ENCODE measurements at regions of chr10 and their contacts with region 1.

Region 1: DNA sequence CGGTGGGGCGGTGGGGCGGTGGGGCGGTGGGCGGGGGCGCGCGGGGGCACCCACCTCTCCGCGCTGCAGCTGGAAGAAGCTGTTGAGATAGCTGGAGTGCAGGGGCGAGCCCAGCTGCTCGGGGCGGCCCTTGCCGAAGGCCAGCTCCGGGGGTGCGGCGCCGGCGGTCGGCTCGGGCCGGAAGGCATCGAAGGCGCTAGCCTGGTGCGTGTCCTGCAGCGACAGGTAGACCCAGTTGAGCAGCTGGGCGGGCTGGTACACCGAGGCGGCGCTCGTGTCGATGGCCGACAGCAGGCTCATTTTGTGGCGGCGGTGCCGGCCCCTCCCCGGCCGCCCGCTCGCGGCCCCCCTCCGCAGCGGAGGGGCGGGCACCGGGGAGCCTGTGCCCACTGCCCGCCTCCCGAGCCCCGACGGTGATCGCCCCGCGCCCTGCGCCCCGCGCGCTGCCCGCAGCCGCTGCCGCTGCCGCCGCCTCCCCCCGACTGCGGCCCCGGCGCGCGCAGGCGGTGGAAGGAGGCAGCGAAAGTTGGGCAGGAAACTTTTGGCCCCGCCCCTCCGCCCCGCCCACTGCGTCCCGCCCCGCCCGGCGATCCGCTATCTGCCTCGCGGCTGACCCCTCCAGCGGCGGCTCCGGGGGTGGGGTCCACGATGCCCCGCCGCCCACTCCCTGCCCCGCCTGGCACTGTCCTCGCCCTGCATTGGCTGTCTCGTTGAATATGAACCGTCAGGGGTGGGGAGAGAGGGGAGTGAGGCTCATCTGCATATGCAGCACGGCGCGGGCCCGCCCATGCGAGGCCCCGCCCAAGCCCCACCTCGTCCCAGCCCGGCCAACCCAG is at the start of gene ZCCHC24:
- DNase-seq: peak; percentile 83 to 95 (median 92)
- ATAC-seq: peak; percentile 95
- H3K4me3 ChIP-seq: peak within 1 kb of the TSS; percentile 78
- H3K4me3 Mint-ChIP-seq: peak within 1 kb of the TSS; percentile 86 to 99 (median 91)
- H3K27ac ChIP-seq: peak within 1 kb of the TSS; percentile 67
- H3K27ac Mint-ChIP-seq: peak within 1 kb of the TSS; percentile 27 to 91 (median 84)
- H3K4me1 ChIP-seq: peaks cover 10% of the 10 kb centered on the region in 2 donors
- H3K4me1 Mint-ChIP-seq: peaks cover 20 to 35% (median 28%) of the 10 kb centered on the region in 7 donors
- H3K27me3 ChIP-seq: no peaks in the 10 kb centered on the region
- H3K27me3 Mint-ChIP-seq: peaks cover 0 to 44% (median 0%) of the 10 kb centered on the region in 5 donors
- total RNA-seq, gene ZCCHC24: 0.58 to 2.0 (median 0.76) TPM

Region 2: GRCh38 chr10:78302989-78303854 is 1142.1 kb before region 1 on chr10:
- CTCF ChIA-PET with region 1: no interaction called
- POLR2A ChIA-PET with region 1: no interaction called
- intact Hi-C with region 1: loop called in 1 of 2 experiments (anchors 1 kb)
- DNase-seq: peak; percentile 89 to 98 (median 94)
- ATAC-seq: peak; percentile 92
- H3K4me3 ChIP-seq: peak overlapping the region; percentile 92
- H3K4me3 Mint-ChIP-seq: peak overlapping the region; percentile 90 to 99 (median 96)
- H3K27ac ChIP-seq: peak overlapping the region; percentile 87
- H3K27ac Mint-ChIP-seq: peak overlapping the region; percentile 94 to 99 (median 97)
- H3K4me1 ChIP-seq: peaks cover 10 to 11% of the 10 kb centered on the region in 2 donors
- H3K4me1 Mint-ChIP-seq: peaks cover 6 to 34% (median 19%) of the 10 kb centered on the region in 7 donors
- H3K27me3 ChIP-seq: no peaks in the 10 kb centered on the region
- H3K27me3 Mint-ChIP-seq: peaks cover 0 to 23% (median 0%) of the 10 kb centered on the region in 5 donors

Region 3: DNA sequence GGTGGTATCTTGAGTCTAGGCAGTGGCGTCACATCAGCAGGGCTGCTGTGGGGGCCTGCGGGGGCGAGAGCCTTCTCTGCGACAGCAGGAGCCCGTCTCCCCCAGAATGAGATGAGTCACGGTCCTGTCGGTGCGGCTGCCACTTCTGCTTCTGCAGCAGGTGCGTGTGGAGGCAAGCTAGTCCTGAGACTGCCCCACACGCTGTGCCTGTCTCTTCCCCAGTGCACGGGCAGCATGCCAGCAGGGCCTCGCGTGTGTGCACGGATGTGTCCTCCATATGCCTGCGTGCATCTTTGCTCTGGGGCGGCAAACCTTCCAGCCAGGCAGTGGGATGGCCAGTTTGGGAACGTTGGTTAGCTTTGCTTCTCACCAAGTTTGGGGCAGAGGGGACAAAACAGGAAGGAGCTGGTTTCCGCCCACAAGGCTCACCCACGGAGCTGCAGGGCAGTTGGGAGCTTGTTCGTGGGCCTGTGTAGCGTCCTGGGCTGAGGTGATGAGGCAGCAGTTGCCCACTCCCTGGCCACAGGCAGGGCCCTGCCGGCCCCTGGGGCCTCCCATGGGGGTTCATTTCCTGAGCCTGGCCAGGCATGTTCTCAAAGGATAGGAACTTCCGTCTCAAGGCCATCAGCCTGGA is 158.9 kb before region 1 on chr10:
- CTCF ChIA-PET with region 1: no interaction called
- POLR2A ChIA-PET with region 1: no interaction called
- intact Hi-C with region 1: loop called (anchors 1 to 5 kb)
- DNase-seq: peak; percentile 51 to 80 (median 75)
- ATAC-seq: peak; percentile 92
- H3K4me3 ChIP-seq: peak overlapping the region; percentile 34
- H3K4me3 Mint-ChIP-seq: peak overlapping the region; percentile 70 to 80 (median 74)
- H3K27ac ChIP-seq: no peak overlapping the region
- H3K27ac Mint-ChIP-seq: peak overlapping the region; percentile 49 to 88 (median 66)
- H3K4me1 ChIP-seq: peaks cover 21 to 31% of the 10 kb centered on the region in 2 donors
- H3K4me1 Mint-ChIP-seq: peaks cover 24 to 52% (median 38%) of the 10 kb centered on the region in 7 donors
- H3K27me3 ChIP-seq: no peaks in the 10 kb centered on the region
- H3K27me3 Mint-ChIP-seq: no peaks in the 10 kb centered on the region

Region 4: DNA sequence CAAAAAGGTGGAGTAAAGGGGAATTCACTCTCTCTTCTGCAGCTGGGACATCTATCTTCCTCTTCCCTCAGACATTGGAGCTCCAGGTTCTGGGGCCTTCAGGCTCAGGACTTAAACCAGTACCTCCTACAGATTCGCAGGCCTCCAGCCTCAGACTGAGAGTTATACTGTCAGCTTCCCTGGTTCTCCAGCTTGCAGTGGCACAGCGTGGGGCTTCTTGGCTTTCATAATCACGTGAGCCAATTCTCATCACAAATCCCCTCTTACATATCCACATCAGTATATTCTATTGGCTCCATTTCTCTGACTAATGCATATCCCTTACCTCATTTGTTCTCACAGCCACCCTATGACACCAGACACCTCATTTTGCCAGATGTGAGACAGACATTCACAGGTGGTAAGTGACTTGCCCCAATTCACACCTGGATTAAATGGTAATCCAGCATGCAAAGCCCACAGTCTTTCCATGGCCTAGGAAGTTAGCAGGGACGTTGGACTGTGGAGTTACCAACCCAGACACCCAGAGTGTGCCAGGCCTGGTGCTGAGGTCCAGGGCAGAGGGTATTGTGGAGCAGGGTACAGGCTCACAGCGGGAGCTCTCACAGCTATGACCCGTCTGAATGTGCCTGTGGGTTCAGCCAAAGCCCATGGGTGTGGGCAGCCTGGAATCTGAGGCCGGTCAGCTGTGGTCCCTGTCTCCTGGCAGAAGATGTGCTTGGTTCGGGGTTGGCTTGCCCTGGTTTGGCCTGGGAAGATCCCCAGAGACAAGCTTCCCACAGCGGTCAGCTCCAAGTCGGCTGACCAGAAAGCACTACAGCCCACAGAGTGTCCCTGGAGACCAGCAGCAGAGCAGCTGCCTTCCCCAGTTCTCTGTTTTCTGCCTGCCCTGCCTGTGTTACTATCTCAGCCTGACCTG is 18.5 kb after region 1 on chr10:
- CTCF ChIA-PET with region 1: no interaction called
- POLR2A ChIA-PET with region 1: no interaction called
- intact Hi-C with region 1: loop called in 1 of 2 experiments (anchors 2 kb)
- DNase-seq: no peak
- ATAC-seq: no peak
- H3K4me3 ChIP-seq: no peak overlapping the region
- H3K4me3 Mint-ChIP-seq: no peak overlapping the region
- H3K27ac ChIP-seq: no peak overlapping the region
- H3K27ac Mint-ChIP-seq: no peak overlapping the region
- H3K4me1 ChIP-seq: no peaks in the 10 kb centered on the region
- H3K4me1 Mint-ChIP-seq: peaks cover 0 to 2% (median 0%) of the 10 kb centered on the region in 7 donors
- H3K27me3 ChIP-seq: no peaks in the 10 kb centered on the region
- H3K27me3 Mint-ChIP-seq: peaks cover 0 to 9% (median 0%) of the 10 kb centered on the region in 5 donors

Region 5: DNA sequence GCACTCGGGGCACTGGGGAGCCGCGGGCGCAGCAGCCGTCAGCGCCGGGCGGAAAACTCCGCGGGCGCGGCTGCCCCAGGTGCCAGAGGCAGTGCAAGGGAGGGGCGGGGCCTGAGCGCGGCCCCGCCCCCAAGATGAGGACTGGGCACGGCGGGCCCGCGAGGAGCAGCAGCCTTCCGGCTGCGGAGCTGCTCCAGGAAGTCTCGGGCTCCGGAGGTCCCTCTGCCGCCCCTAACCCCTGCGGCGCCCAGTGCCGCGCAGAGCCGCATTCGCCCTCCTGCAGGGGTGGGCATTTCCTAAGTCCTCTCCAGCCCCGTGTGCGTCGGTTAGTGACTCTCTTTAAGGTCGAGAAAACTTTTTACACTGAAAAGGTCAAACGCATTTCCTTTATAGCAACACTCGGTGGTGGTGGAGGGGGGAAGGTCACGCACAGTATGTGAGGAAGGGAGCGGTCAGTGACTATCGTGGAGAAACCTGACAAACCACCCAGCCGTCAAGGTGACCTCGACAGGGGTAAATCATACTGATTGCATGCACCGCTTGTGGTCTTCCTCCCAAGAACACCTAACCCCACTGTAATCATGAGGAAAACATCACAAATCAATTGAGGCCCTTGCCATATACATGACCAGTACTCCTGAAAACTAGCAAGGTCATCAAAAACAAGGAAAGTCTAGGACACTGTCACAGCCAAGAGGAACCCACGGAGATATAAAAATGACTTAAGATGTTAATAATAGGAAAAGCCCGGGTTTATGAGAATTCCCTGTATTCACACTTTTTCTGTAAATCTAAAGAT is 760.3 kb after region 1 on chr10 and contains the start of gene ANXA11:
- CTCF ChIA-PET with region 1: no interaction called
- POLR2A ChIA-PET with region 1: no interaction called
- intact Hi-C with region 1: loop called (anchors 2 to 10 kb)
- DNase-seq: peak; percentile 76 to 85 (median 81)
- ATAC-seq: peak; percentile 91
- H3K4me3 ChIP-seq: peak within 1 kb of the TSS; percentile 90
- H3K4me3 Mint-ChIP-seq: peak within 1 kb of the TSS; percentile 83 to 93 (median 88)
- H3K27ac ChIP-seq: peak within 1 kb of the TSS; percentile 94
- H3K27ac Mint-ChIP-seq: peak within 1 kb of the TSS; percentile 89 to 98 (median 96)
- H3K4me1 ChIP-seq: peaks cover 34 to 36% of the 10 kb centered on the region in 2 donors
- H3K4me1 Mint-ChIP-seq: peaks cover 41 to 69% (median 48%) of the 10 kb centered on the region in 7 donors
- H3K27me3 ChIP-seq: no peaks in the 10 kb centered on the region
- H3K27me3 Mint-ChIP-seq: no peaks in the 10 kb centered on the region
- total RNA-seq, gene ANXA11: 189 to 247 (median 231) TPM

Measured in naive thymus-derived CD4-positive, alpha-beta T cell (primary cell).